HEK293T (cell line): ENCODE measurements at regions of chr12 and their contacts with region 1.

Region 1: GRCh38 chr12:7797698-7798398 is 8.6 kb downstream of the NANOG start:
- DNase-seq: no peak

Region 2: DNA sequence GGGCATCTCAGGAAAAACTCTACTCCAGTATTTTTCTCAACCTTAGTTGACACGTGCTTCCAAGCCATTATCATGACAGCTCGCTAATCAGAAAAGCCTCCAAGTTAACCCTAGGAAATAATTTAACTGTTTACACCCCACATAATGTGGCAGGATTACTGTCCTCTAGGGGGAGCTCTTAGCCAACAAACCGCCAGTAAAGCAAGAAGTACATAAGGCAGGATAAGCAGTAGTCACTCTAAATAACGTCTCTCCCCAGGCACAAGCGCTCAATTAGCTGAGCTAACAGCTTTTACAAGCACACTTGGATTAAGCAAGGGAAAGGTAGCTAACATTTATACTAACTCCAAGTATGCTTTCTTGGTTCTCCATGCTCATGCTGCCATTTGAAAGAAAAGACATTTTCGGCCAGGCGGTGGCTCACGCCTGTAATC is 155.0 kb before region 1 on chr12:
- CTCF ChIA-PET with region 1: interaction called, 12 read pairs
- POLR2A ChIA-PET with region 1: no interaction called
- DNase-seq: no peak

Region 3: GRCh38 chr12:7769999-7770398 is 27.8 kb before region 1 on chr12:
- CTCF ChIA-PET with region 1: no interaction called
- POLR2A ChIA-PET with region 1: no interaction called
- DNase-seq: no peak